Motor neuron (in vitro differentiated cells): ENCODE measurements at regions of chr11 and their contacts with region 1.

Region 1: DNA sequence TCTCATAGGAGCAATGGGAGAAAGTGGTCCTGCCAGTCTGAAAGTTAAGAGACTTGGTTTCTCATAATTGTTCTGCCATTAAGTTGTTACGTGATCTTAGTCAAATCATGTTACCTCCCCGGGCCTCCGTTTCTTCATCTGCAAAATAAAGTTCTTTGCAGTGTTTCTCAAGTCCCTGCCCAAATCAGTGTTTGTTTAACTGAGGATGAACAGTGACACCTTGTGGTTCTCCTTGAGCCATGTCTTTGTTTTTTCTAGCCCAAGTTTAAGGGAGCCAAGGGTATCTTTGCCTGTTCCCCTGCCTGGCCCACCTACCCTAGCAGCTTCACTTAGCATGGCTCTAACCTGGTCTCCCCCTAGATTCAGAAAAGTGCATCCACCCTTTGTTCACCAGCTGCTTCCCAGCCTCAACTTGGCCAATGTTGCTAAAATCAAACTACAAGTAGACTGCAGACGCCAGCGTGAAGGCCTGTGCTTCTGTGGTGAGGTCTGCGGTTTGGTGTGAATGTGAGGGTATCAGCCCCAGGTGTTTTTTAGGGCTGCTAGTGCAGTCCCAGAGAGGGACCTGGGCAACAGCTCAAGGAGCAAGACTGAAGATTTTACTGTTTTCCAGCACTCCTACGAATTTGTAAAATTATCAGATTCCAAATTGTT is 35.5 kb downstream of the FZD4 start:
- ATAC-seq: peak in 4 of 8 experiments; percentile 43 to 85 (median 54)
- H3K4me3 ChIP-seq: no peak overlapping the region
- H3K27ac ChIP-seq: no peak overlapping the region
- H3K4me1 ChIP-seq: peaks cover 5 to 6% of the 10 kb centered on the region in 2 donors

Region 2: GRCh38 chr11:86869966-86870570 is 49.6 kb before region 1 on chr11:
- in situ Hi-C with region 1: loop called in 1 of 9 experiments (anchors 10 kb)
- ATAC-seq: peak; percentile 47 to 91 (median 60)
- H3K4me3 ChIP-seq: no peak overlapping the region
- H3K27ac ChIP-seq: no peak overlapping the region
- H3K4me1 ChIP-seq: no peaks in the 10 kb centered on the region

Region 3: GRCh38 chr11:87022254-87022653 is 102.6 kb after region 1 on chr11:
- in situ Hi-C with region 1: no loop called
- ATAC-seq: no peak
- H3K4me3 ChIP-seq: no peak overlapping the region
- H3K27ac ChIP-seq: no peak overlapping the region
- H3K4me1 ChIP-seq: no peaks in the 10 kb centered on the region

Region 4: DNA sequence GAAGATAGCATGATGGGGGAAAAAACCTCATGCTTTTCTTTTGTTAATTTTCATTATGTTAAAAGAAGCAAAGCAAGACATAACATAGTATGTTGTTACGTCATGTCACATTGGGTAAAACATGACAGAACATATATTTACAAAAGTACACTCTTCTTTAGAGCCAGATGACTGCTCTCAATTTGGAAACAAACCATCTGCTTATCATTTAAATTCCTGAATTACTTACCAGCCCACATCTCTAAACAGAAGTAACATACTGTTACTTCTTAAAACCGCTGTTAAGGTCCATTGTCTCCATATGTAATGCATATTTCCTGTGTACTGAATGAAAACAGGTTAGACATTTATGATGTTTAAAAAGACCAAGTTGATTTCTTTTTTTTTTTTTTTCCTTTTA is 218.0 kb after region 1 on chr11:
- in situ Hi-C with region 1: no loop called
- ATAC-seq: no peak
- H3K4me3 ChIP-seq: no peak overlapping the region
- H3K27ac ChIP-seq: no peak overlapping the region
- H3K4me1 ChIP-seq: no peaks in the 10 kb centered on the region